ENCODE measurements at regions of chr17 and their contacts with region 1.

Region 1: GRCh38 chr17:29931231-29931932 is 1.4 kb upstream of the SSH2 start:
- DNase-seq: peak; percentile 43
- H3K4me3 ChIP-seq: peak overlapping the region; percentile 84
- H3K27ac ChIP-seq: peak overlapping the region; percentile 92
- H3K4me1 ChIP-seq: peaks cover 53% of the 10 kb centered on the region
- H3K27me3 ChIP-seq: no peaks in the 10 kb centered on the region
- CTCF ChIP-seq: peak; percentile 94

Region 2: DNA sequence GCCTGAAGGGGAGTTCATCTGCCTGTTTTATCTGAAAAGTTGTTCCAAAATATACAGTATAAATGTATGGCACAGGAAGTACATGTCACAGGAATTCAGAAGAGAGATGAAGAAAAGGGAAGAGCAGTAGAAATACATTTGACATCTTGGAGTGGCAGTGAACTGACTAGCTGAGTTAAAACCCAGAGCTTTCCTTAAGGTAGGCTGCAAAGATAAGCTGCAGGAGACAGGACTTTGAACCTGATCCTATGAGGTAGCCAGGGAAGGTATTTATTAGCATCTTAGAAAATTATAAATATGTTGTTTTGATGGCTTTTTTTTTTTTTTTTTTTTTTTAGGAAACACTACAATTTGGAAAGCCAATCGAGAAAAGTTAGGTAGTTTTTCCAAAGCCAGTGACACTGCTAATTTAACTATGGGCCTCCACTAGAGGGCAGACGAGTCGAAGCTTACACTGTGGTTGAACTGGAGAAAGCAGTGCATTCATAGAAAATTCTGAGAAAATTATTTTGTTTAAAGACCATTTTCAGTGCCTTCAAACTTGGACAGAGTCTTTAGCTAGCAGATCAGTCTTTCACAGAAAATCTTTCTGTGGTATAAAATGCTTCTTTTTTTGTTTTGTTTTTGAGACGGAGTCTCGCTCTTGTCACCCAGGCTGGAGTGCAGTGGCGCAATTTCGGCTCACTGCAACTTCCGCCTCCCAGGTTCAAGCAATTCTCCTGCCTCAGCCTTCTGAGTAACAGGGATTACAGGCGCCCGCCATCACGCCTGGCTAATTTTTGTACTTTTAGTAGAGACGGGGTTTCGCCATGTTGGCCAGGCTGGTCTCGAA is 123.6 kb before region 1 on chr17:
- intact Hi-C with region 1: loop called (anchors 2 kb)
- DNase-seq: peak; percentile 23
- H3K4me3 ChIP-seq: no peak overlapping the region
- H3K27ac ChIP-seq: no peak overlapping the region
- H3K4me1 ChIP-seq: no peaks in the 10 kb centered on the region
- H3K27me3 ChIP-seq: no peaks in the 10 kb centered on the region
- CTCF ChIP-seq: peak; percentile 84

Region 3: DNA sequence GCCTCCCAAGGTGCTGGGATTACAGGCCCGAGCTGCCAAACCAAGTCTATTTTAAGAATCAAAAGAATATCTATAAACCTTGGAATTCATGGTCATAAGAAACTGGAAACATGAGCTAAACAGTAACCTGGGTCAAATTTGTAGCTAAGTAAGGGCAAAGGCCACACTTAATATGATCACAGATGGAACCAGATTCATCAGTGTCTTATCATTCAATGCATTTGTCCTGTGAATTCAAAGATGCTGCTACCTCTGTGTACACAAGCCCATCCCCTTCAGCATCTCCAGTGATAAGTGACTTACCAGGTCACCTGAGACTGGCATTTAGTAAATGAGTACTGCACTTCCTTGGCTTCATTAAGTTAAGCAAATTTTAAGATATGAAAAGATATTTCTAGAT is 109.5 kb before region 1 on chr17:
- intact Hi-C with region 1: no loop called
- DNase-seq: no peak
- H3K4me3 ChIP-seq: no peak overlapping the region
- H3K27ac ChIP-seq: no peak overlapping the region
- H3K4me1 ChIP-seq: no peaks in the 10 kb centered on the region
- H3K27me3 ChIP-seq: no peaks in the 10 kb centered on the region
- CTCF ChIP-seq: no peak

Measured in left ventricle myocardium inferior (tissue), 1 donor.